ENCODE measurements at regions of chr9 and their contacts with region 1.

Region 1: DNA sequence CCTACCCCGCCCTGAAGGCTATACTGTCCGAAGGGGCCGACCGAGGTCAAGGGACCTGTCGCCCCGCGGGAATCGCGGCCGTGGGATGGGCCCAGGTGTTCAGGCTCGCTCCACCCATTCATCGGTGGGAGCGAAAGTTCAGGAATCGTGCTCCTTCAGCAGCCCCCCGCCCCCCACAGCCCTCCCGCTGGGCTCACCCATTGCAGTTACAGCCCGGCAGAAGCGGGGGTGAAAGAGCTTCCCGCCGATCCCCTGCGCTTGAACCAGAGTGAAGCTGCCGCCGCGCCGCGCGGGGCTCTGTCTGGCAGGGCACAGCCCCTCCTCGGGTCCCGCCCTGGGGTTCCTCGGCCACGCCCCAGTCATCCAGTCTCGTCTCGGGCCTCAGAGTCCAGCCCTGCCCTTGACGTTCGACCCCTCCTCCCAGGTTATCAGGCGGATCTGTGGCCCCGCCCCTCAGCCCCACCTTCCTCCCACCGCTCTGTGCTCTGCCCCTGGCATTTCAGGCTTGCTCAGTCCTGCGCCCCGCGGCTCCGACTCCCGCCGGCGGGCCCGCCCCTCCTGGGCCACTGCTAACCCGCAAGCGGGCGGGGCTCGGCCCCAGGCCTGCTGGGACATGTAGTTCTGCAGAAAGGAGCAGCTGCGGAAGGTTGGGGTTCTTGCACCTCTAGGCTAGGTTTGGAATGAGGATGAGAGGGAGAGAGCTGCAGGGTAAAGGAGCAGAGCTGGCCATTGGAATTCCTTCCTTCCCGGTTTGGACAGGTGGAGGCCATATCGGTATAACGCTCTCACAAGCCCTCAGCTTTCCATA is at the start of gene MYORG:
- DNase-seq: peak; percentile 94 to 98 (median 96)
- H3K4me3 ChIP-seq: peak within 1 kb of the TSS; percentile 74
- H3K4me3 Mint-ChIP-seq: peak within 1 kb of the TSS; percentile 81 to 96 (median 94)
- H3K27ac ChIP-seq: peak within 1 kb of the TSS; percentile 64
- H3K27ac Mint-ChIP-seq: peak within 1 kb of the TSS; percentile 84 to 96 (median 95)
- H3K4me1 ChIP-seq: peaks cover 38% of the 10 kb centered on the region
- H3K4me1 Mint-ChIP-seq: peaks cover 37 to 56% (median 43%) of the 10 kb centered on the region in 3 donors
- H3K27me3 ChIP-seq: no peaks in the 10 kb centered on the region
- H3K27me3 Mint-ChIP-seq: no peaks in the 10 kb centered on the region
- total RNA-seq, gene MYORG: 2.3 to 2.4 TPM

Region 2: GRCh38 chr9:34332076-34332964 is 44.5 kb before region 1 on chr9:
- CTCF ChIA-PET with region 1: interaction called, 73 read pairs
- POLR2A ChIA-PET with region 1: interaction called, 3 read pairs
- DNase-seq: peak in 1 of 5 donors; percentile 29
- H3K4me3 ChIP-seq: no peak overlapping the region
- H3K4me3 Mint-ChIP-seq: peak overlapping the region in 4 of 7 donors; percentile 11 to 78 (median 38)
- H3K27ac ChIP-seq: no peak overlapping the region
- H3K27ac Mint-ChIP-seq: peak overlapping the region in 5 of 8 donors; percentile 23 to 78 (median 66)
- H3K4me1 ChIP-seq: peaks cover 14% of the 10 kb centered on the region
- H3K4me1 Mint-ChIP-seq: peaks cover 28 to 51% (median 35%) of the 10 kb centered on the region in 3 donors
- H3K27me3 ChIP-seq: no peaks in the 10 kb centered on the region
- H3K27me3 Mint-ChIP-seq: no peaks in the 10 kb centered on the region

Region 3: DNA sequence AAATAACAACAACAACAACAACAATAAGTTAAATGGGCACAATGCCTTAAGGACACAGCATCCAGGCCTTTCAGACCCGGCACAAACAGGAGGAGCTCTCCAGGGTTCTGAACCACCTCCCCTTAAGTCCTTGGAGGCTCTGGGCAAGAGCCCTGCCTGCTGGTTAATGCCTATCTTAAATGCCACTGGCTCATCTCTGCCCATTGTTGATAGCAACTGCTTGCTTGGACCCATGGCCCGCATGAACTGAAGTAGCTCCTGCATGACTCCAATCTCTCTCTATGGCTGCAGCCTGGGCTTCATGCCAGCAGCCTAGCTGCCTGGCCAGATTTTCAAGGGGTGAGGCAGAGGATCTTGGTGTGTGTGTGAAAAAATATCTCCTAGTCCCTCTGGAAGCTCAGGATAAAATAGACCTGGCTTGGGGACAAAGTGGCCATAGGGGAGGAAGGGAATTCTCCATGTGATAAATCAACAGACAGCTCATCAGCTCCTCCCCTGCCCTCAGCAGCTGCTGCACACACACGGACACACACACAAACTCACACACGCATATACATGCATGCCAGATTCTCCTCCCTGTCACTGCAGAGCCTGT is 54.1 kb after region 1 on chr9:
- CTCF ChIA-PET with region 1: no interaction called
- POLR2A ChIA-PET with region 1: no interaction called
- DNase-seq: no peak
- H3K4me3 ChIP-seq: no peak overlapping the region
- H3K4me3 Mint-ChIP-seq: no peak overlapping the region
- H3K27ac ChIP-seq: no peak overlapping the region
- H3K27ac Mint-ChIP-seq: no peak overlapping the region
- H3K4me1 ChIP-seq: no peaks in the 10 kb centered on the region
- H3K4me1 Mint-ChIP-seq: no peaks in the 10 kb centered on the region
- H3K27me3 ChIP-seq: no peaks in the 10 kb centered on the region
- H3K27me3 Mint-ChIP-seq: no peaks in the 10 kb centered on the region